ENCODE measurements at regions of chr3 and their contacts with region 1.

Region 1: DNA sequence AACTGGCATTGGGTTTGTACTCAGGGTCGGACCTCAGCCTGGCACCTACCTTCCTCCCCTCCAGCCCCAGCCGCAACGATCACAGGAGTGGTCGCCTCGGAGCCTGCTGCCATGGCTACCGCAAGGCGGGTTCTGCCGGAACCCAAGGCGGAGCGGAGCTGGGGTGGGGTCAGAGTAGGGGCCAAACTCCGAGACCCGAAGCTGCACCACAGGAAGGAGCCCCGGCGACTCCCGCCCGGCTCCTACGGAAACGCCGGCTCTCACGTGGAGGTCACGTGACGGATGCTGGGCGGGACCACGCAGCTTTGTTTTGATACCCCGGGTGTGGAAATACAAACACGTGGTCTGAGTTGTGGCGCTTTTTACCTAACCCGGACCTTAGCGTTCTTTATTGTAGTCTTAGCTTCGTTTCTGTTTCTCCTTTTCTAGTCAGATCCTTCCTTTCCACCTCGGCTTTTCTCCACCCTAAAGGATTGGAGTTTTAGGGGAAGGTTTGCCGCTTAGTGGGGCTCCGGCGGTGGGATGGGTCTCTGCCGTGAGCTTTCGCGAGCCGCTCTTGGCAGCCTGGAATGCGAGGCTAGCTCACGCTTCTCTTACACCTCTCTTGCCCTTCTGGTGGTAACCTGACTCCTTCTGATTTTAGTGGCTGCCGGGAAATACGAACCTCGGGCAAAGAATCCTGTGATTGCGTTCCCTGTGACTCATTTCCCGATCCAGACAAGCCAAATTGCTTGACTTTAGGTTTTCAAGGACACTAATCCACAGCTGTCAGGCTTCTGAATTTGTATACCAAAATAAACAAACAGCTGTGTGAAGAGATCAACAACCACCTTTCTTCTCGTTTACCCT is at the start of gene HSPBAP1:
- DNase-seq: peak; percentile 96
- ATAC-seq: peak; percentile 57
- H3K4me3 ChIP-seq: peak within 1 kb of the TSS; percentile 58 to 96 (median 83)
- H3K4me3 Mint-ChIP-seq: peak within 1 kb of the TSS; percentile 86
- H3K27ac ChIP-seq: peak within 1 kb of the TSS; percentile 98 to 99
- H3K27ac Mint-ChIP-seq: no peak within 1 kb of the TSS
- H3K4me1 ChIP-seq: peaks cover 23 to 26% of the 10 kb centered on the region in 2 donors
- H3K4me1 Mint-ChIP-seq: peaks cover 27% of the 10 kb centered on the region
- H3K27me3 ChIP-seq: no peaks in the 10 kb centered on the region
- H3K27me3 Mint-ChIP-seq: no peaks in the 10 kb centered on the region
- CTCF ChIP-seq: no peak
- total RNA-seq, gene HSPBAP1: 49.2 and 49.6 TPM in 2 replicates

Region 2: GRCh38 chr3:121660356-121661171 is 1133.2 kb before region 1 on chr3 and contains the start of gene HCLS1:
- CTCF ChIA-PET with region 1: no interaction called
- POLR2A ChIA-PET with region 1: no interaction called
- intact Hi-C with region 1: loop called (anchors 1 kb)
- DNase-seq: peak; percentile 91
- ATAC-seq: peak; percentile 84
- H3K4me3 ChIP-seq: peak within 1 kb of the TSS; percentile 59 to 92 (median 68)
- H3K4me3 Mint-ChIP-seq: peak within 1 kb of the TSS; percentile 97
- H3K27ac ChIP-seq: peak within 1 kb of the TSS; percentile 90 to 94
- H3K27ac Mint-ChIP-seq: peak within 1 kb of the TSS; percentile 98
- H3K4me1 ChIP-seq: peaks cover 34 to 39% of the 10 kb centered on the region in 2 donors
- H3K4me1 Mint-ChIP-seq: peaks cover 54% of the 10 kb centered on the region
- H3K27me3 ChIP-seq: no peaks in the 10 kb centered on the region
- H3K27me3 Mint-ChIP-seq: no peaks in the 10 kb centered on the region
- CTCF ChIP-seq: no peak
- total RNA-seq, gene HCLS1: 317 and 331 TPM in 2 replicates

Region 3: DNA sequence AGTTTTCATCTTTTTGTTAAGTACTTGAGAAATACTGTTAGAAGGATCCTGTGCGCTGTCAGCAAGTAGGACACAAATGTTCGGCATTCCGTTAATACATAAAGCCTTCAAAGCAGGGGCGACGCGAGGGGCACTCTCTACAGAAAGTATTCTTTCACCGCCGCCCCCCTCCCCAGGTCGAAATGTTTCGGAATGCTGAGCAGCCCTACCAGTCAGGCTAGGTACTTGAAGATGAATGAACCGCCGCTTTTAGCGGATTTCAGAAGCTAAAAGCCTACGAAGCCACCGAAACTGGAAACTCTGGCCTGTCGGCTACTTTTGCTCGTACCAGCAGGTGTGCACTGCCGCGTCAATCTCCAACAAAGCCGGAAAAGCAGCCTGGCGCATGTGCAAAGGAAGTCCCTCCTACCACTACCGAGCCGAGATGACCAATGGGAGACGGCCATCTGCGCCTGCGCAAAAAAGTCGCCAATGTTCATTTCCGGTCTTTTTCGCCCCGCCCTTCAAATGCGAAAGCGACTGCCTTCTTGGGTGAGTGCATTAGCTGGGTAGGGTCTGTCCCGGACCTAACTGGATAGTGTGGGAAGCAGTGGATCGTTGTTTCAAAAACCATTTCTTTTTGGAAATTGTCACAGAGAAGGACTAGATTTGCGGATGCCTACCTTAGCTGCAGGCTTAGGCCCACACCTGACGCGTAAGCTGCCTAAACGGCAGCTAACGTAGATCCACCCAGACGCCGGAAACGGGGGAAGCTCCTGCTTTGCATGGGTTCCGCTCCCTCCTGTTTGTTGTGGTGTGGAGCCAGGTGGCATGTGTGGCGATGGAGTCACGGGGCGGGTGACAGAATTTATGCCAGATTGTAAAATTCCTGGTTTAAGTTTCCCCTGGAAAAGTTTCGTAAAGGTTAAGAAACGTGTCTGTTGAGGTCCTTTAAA is 377.8 kb before region 1 on chr3 and contains the start of gene WDR5B:
- CTCF ChIA-PET with region 1: no interaction called
- POLR2A ChIA-PET with region 1: interaction called, 4 read pairs
- intact Hi-C with region 1: loop called (anchors 1 kb)
- DNase-seq: peak; percentile 100
- ATAC-seq: peak; percentile 88
- H3K4me3 ChIP-seq: peak within 1 kb of the TSS; percentile 74 to 98 (median 83)
- H3K4me3 Mint-ChIP-seq: peak within 1 kb of the TSS; percentile 100
- H3K27ac ChIP-seq: peak within 1 kb of the TSS; percentile 87 to 97
- H3K27ac Mint-ChIP-seq: peak within 1 kb of the TSS; percentile 100
- H3K4me1 ChIP-seq: peaks cover 20 to 26% of the 10 kb centered on the region in 2 donors
- H3K4me1 Mint-ChIP-seq: peaks cover 55% of the 10 kb centered on the region
- H3K27me3 ChIP-seq: no peaks in the 10 kb centered on the region
- H3K27me3 Mint-ChIP-seq: no peaks in the 10 kb centered on the region
- CTCF ChIP-seq: no peak
- total RNA-seq, gene WDR5B: 11.6 and 12.3 TPM in 2 replicates

Region 4: GRCh38 chr3:122514123-122515019 is 279.4 kb before region 1 on chr3 and contains the start of gene KPNA1:
- CTCF ChIA-PET with region 1: no interaction called
- POLR2A ChIA-PET with region 1: no interaction called
- intact Hi-C with region 1: loop called (anchors 1 kb)
- DNase-seq: peak; percentile 94
- ATAC-seq: peak; percentile 79
- H3K4me3 ChIP-seq: peak within 1 kb of the TSS; percentile 64 to 90 (median 85)
- H3K4me3 Mint-ChIP-seq: peak within 1 kb of the TSS; percentile 81
- H3K27ac ChIP-seq: peak within 1 kb of the TSS; percentile 92 to 99
- H3K27ac Mint-ChIP-seq: peak within 1 kb of the TSS; percentile 96
- H3K4me1 ChIP-seq: peaks cover 11 to 15% of the 10 kb centered on the region in 2 donors
- H3K4me1 Mint-ChIP-seq: peaks cover 34% of the 10 kb centered on the region
- H3K27me3 ChIP-seq: no peaks in the 10 kb centered on the region
- H3K27me3 Mint-ChIP-seq: no peaks in the 10 kb centered on the region
- CTCF ChIP-seq: no peak
- total RNA-seq, gene KPNA1: 79.4 and 85.9 TPM in 2 replicates

Region 5: DNA sequence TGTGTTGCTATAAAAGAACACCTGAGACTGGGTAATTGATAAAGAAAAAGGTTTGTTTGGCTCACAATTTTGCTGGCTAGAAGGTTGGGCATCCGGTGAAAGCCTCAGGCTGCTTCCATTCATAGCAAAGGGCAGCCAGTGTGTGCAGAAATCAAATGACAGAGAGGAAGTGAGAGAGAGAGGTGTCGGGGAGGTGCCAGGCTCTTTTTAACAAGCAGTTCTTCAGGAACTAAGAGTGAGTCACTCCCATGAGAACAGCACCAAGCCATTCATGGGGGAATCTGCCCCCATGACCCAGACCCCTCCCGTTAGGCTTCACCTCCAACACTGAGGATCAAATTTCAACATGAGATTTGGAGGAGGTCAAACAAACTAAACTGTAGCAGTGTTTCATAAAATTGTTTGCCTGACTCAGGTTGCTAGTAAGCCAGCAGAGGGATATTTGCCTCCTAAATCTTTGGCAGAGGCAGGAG is 220.8 kb before region 1 on chr3:
- CTCF ChIA-PET with region 1: no interaction called
- POLR2A ChIA-PET with region 1: interaction called, 3 read pairs
- intact Hi-C with region 1: loop called (anchors 1 kb)
- DNase-seq: peak; percentile 73
- ATAC-seq: peak; percentile 22
- H3K4me3 ChIP-seq: no peak overlapping the region
- H3K4me3 Mint-ChIP-seq: peak overlapping the region; percentile 20
- H3K27ac ChIP-seq: peak overlapping the region; percentile 66 to 78
- H3K27ac Mint-ChIP-seq: peak overlapping the region; percentile 93
- H3K4me1 ChIP-seq: peaks cover 65 to 73% of the 10 kb centered on the region in 2 donors
- H3K4me1 Mint-ChIP-seq: peaks cover 75% of the 10 kb centered on the region
- H3K27me3 ChIP-seq: no peaks in the 10 kb centered on the region
- H3K27me3 Mint-ChIP-seq: no peaks in the 10 kb centered on the region
- CTCF ChIP-seq: no peak

Region 6: GRCh38 chr3:122754929-122755328 is 38.9 kb before region 1 on chr3:
- CTCF ChIA-PET with region 1: interaction called, 7 read pairs
- POLR2A ChIA-PET with region 1: interaction called, 5 read pairs
- intact Hi-C with region 1: loop called (anchors 5 kb)
- DNase-seq: peak; percentile 69
- ATAC-seq: peak; percentile 76
- H3K4me3 ChIP-seq: no peak overlapping the region
- H3K4me3 Mint-ChIP-seq: no peak overlapping the region
- H3K27ac ChIP-seq: no peak overlapping the region
- H3K27ac Mint-ChIP-seq: no peak overlapping the region
- H3K4me1 ChIP-seq: no peaks in the 10 kb centered on the region
- H3K4me1 Mint-ChIP-seq: no peaks in the 10 kb centered on the region
- H3K27me3 ChIP-seq: no peaks in the 10 kb centered on the region
- H3K27me3 Mint-ChIP-seq: no peaks in the 10 kb centered on the region
- CTCF ChIP-seq: peak; percentile 76

Measured in B cell (primary cell).